Left ventricle myocardium superior (tissue), 1 donor: ENCODE measurements at regions of chr18 and their contacts with region 1.

Region 1: DNA sequence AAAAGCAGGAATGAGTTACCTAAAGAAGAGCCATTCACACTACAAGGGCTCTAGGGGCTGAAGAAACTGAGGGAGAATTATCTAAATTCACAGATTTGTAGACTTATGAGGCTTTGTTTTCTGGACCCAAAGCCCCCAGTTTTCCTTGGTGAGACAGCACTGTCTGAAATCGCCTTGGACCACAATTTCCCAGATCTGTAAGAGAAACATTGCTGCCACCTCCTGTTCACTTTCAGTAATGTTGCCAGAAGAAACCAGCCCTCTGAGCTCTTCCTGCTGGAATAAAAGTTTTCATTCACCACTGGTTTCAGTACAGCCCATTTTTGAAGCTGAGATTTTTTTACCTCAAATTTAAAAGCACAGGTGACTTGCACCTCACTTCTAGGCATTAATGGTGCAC is 169.2 kb downstream of the CDH20 start:
- DNase-seq: no peak
- ATAC-seq: peak; percentile 49

Region 2: GRCh38 chr18:60601249-60601648 is 901.2 kb before region 1 on chr18:
- intact Hi-C with region 1: loop called (anchors 10 kb)
- DNase-seq: no peak
- ATAC-seq: no peak

Region 3: GRCh38 chr18:61322265-61322873 is 180.1 kb before region 1 on chr18:
- intact Hi-C with region 1: loop called (anchors 10 kb)
- DNase-seq: peak; percentile 60
- ATAC-seq: peak; percentile 69

Region 4: DNA sequence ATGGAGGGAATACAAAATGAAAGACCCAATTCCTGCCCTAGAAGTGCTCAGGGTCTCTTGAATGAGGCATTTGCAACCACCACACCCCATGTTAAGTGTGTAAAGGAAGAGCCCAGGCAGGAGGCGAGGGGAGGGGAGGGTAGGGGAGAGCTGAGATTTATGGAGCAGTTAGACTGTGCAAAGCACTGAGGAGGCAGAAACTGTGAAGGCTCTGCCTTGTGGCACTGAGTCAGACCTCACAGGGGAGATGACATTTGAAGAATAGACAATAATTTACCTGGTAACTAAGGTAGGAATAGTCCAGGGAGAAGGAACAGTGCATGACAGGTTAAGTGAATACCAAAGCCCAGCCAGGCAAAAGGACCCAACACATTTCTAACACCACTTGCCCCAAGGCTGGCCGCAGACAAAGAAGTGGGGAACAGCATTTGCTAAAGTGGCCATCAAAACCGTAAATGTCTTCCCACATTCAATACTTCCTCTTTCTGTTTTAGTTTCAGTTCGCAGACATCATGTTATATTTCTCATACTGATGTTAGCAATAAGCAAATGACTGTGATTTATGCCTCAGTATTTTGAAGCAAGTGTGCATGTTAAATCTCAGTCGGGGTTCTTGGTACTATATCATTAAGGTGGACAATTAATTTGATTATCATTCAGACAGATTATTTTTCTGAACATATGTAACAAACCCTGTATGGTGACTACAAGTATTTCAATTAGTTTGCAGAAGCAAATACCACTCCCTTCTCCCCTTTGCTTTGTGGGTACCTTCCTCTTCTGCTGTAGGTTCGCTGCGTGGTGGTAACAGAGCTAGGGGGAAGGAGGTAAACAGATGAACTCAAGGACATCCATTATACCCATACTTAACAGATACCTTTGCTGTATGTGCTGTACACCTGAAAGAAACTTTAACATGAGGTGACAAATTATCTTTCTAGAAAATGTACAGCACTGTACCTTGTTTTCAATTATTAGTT is 141.8 kb before region 1 on chr18:
- intact Hi-C with region 1: no loop called
- DNase-seq: no peak
- ATAC-seq: no peak

Region 5: DNA sequence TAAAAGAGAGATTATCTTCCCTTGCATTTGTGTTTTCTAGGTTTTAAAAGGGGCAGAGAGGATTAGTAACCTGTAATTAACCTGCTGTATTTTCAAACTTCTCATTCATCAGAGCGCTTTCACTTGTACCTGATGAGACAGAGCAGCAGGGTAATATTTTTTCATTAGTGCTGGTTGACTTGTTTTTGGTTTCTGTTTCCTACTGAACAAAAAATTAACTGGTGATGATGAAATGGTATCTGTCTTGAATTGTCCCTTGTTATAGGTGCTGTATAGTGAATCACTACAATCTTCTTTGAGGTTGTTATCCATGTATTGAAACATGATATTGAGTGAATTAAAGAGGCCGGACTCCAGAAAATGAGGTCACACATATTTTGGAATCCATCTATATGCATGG is 131.4 kb before region 1 on chr18:
- intact Hi-C with region 1: no loop called
- DNase-seq: no peak
- ATAC-seq: no peak

Region 6: GRCh38 chr18:61619783-61620182 is 117.3 kb after region 1 on chr18:
- intact Hi-C with region 1: no loop called
- DNase-seq: no peak
- ATAC-seq: no peak

Region 7: DNA sequence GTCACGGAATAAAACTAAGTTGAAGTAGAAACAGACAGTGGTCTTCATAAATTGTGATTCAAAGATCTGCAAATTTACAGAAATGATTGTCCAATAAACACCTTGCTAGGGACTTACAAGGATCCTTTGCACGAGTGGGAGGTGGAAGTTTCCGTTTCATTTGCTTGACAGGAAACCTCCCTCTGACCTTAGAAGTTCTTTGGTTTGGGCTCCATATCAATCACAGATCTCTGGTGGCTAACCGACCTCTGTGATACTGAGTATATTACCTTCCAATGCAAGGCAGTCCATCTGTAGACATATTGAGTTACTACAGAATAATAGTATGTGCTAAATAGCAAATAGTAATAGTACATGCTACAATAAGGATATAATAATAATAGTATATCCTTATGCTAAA is 424.1 kb after region 1 on chr18:
- intact Hi-C with region 1: no loop called
- DNase-seq: no peak
- ATAC-seq: no peak